ENCODE measurements at regions of chr10 and their contacts with region 1.

Region 1: GRCh38 chr10:35225204-35225603 is 98.6 kb downstream of the CREM start:
- DNase-seq: no peak
- H3K4me3 Mint-ChIP-seq: no peak overlapping the region
- H3K27ac Mint-ChIP-seq: peak overlapping the region; percentile 2
- H3K4me1 Mint-ChIP-seq: peaks cover 6% of the 10 kb centered on the region
- H3K27me3 Mint-ChIP-seq: peaks cover under 1% of the 10 kb centered on the region

Region 2: DNA sequence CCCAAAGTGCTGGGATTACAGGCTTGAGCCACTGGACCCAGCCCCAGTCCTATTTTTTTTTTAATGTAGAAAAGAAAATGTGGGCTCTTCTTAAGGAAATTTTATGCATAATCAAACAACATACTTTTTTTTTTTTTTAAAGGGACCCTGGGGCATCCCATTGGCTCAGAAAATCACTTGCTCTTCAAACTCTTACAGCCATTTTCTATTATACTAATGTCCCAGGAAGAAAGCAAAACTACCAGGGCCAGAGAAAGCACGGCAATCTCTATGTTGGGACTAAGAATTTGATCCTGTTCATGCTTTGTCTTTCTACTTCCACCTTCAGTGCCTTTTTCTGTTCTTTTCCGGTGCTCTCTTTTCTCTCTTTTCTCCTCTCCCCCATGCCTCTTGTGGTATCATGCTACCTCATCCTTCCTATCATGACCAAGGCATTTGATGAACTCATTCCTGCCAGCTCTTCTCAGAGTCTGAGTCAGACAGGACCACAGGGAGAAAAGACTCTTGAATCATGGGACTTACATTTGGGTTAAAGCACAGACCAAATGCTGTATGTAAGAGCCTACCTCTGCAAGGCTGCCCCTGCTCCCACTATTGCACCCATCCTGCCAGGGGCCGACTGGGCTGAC is 34.7 kb after region 1 on chr10:
- intact Hi-C with region 1: no loop called
- DNase-seq: no peak
- H3K4me3 Mint-ChIP-seq: no peak overlapping the region
- H3K27ac Mint-ChIP-seq: no peak overlapping the region
- H3K4me1 Mint-ChIP-seq: peaks cover 3% of the 10 kb centered on the region
- H3K27me3 Mint-ChIP-seq: peaks cover 4% of the 10 kb centered on the region

Region 3: DNA sequence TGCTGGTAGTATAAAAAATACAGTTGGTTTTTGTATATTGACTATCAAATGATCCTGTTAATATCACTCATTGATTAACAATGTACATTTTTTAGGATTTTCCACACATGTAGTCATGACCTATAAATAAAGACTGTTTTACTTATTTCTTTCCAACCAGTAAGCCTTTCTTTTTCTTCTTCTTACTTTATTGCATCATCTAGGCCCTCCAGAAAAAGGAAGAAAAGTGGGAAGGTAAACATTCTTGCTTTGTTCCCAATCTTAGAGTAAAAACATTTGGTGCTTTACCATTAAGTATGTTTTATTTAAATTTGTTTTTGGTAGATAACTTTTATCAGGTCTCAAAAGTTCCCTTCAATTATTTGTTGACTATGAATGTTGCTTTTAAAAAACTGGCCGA is 64.0 kb after region 1 on chr10:
- intact Hi-C with region 1: no loop called
- DNase-seq: no peak
- H3K4me3 Mint-ChIP-seq: no peak overlapping the region
- H3K27ac Mint-ChIP-seq: no peak overlapping the region
- H3K4me1 Mint-ChIP-seq: no peaks in the 10 kb centered on the region
- H3K27me3 Mint-ChIP-seq: peaks cover 4% of the 10 kb centered on the region

Region 4: GRCh38 chr10:35324196-35324595 is 99.0 kb after region 1 on chr10:
- intact Hi-C with region 1: no loop called
- DNase-seq: no peak
- H3K4me3 Mint-ChIP-seq: no peak overlapping the region
- H3K27ac Mint-ChIP-seq: no peak overlapping the region
- H3K4me1 Mint-ChIP-seq: peaks cover 8% of the 10 kb centered on the region
- H3K27me3 Mint-ChIP-seq: no peaks in the 10 kb centered on the region

Region 5: DNA sequence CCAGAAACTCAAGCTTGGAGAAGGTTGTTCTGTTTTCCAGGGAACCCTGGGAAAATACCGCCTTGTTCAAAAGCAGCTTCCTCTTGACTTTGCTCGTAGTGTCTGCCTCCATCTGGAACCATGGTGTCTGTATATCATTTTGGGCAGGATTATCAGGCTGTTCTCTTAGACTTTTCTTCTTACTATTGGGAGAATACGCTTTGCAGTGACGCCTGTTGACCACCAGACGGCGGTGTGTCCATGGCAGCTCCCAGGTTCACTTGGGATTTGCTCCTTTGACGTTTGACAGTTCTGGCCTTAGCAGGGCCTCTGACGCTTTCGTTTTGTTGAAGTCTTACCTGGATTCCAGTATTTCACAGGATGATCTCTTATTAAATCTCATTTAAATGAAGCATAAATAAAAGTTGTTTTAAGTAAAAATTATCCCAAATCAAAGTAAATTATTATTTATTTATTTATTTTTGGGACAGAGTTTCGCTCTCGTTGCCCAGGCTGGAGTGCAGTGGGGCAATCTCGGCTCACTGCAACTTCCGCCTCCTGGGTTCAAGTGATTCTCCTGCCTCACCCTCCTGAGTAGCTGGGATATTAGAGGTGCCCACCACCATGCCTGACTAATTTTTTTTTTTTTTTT is 338.2 kb after region 1 on chr10:
- intact Hi-C with region 1: loop called (anchors 10 kb)
- DNase-seq: peak; percentile 81
- H3K4me3 Mint-ChIP-seq: no peak overlapping the region
- H3K27ac Mint-ChIP-seq: peak overlapping the region; percentile 66
- H3K4me1 Mint-ChIP-seq: peaks cover 10% of the 10 kb centered on the region
- H3K27me3 Mint-ChIP-seq: no peaks in the 10 kb centered on the region

Measured in activated CD4-positive, alpha-beta T cell treated with anti-CD3 and anti-CD28 coated beads, Interleukin-2, amount 10 ng/mL, durations not matched to agents 24 days and 14 days (primary cell).